ENCODE measurements at regions of chr22 and their contacts with region 1.

Region 1: DNA sequence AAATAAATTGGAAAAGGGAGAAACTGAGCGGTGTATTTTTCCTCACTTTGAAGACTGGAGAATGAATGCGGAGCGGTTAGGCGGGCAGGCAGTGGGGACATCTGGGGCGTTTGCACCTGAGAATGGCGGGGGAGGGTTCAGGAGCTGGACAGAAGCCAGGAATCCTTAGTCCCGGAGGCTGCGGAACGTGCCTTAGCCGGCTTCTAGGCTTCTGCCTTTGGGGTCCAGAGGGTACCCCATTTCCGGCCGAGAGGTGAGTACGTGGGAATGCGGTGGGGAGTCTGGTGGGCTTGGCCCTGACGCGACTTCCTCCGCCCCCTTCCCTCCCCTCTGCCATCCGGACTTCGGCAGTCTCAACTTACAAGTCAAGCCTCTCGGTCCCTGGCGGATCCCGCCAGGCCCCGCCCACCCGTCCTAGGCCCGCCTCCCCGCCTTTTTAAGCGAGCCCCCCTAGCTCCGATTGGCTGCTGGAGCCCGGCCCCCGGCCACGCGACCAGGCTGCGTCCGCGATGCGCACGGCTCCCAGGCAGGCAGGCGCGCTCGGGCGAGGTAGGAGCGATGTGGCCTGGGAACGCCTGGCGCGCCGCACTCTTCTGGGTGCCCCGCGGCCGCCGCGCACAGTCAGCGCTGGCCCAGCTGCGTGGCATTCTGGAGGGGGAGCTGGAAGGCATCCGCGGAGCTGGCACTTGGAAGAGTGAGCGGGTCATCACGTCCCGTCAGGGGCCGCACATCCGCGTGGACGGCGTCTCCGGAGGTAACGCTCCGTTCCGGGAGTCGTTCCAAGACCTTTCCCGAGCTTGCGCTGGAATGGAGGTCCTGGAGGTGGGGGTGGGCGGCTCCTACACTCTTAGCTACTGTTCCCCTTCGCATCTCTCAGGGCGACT is at the start of gene GCAT:
- DNase-seq: peak; percentile 61 to 92 (median 71)
- ATAC-seq: peak; percentile 94
- H3K4me3 ChIP-seq: peak within 1 kb of the TSS; percentile 58
- H3K4me3 Mint-ChIP-seq: peak within 1 kb of the TSS; percentile 67 to 90 (median 80)
- H3K27ac ChIP-seq: peak within 1 kb of the TSS; percentile 44
- H3K27ac Mint-ChIP-seq: peak within 1 kb of the TSS in 6 of 9 donors; percentile 8 to 65 (median 44)
- H3K4me1 ChIP-seq: peaks cover 14 to 30% of the 10 kb centered on the region in 2 donors
- H3K4me1 Mint-ChIP-seq: peaks cover 15 to 51% (median 43%) of the 10 kb centered on the region in 7 donors
- H3K27me3 ChIP-seq: peaks cover 0 to 25% of the 10 kb centered on the region in 2 donors
- H3K27me3 Mint-ChIP-seq: peaks cover 4 to 38% (median 23%) of the 10 kb centered on the region in 5 donors
- total RNA-seq, gene GCAT: 1.1 to 14.6 (median 5.4) TPM

Region 2: DNA sequence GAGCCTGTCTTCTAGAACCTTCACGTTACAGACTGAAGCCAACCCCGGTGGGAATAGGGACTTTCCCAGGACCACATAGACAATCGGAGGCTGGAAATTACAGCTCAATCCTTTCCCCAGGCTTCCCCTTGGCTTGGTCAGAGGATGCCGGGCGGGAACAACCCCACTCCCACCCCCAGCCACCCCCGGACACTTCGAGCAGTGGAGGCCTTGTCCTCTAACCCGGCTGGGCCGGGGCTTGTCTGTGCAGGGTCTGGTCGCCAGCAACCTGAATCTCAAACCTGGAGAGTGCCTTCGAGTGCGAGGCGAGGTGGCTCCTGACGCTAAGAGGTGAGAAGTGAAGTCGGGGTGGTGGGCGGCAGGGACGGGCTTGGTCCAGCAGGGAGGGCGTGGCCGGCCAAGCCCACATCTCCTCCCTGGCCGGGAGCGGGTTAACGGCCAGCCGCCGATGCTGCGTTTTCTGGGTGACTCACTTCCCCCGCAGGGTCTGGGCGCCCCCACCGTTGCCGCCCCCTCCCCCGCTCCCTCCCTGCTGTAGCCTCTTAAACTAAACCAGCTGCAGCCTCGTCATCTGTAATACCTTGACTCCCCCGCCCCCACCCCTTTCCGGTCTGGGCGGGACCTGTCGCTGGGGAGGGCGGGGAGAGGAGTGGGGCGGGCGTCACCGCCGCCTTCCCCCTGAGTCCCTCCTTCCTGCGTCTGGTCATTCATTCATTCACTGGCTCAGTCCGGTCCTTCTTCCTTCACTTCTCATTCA is 130.7 kb before region 1 on chr22:
- CTCF ChIA-PET with region 1: no interaction called
- POLR2A ChIA-PET with region 1: no interaction called
- intact Hi-C with region 1: loop called (anchors 5 to 10 kb)
- DNase-seq: peak; percentile 82 to 95 (median 94)
- ATAC-seq: peak; percentile 93
- H3K4me3 ChIP-seq: peak overlapping the region; percentile 60
- H3K4me3 Mint-ChIP-seq: peak overlapping the region; percentile 82 to 99 (median 91)
- H3K27ac ChIP-seq: peak overlapping the region; percentile 99
- H3K27ac Mint-ChIP-seq: peak overlapping the region; percentile 94 to 100 (median 100)
- H3K4me1 ChIP-seq: peaks cover 29 to 37% of the 10 kb centered on the region in 2 donors
- H3K4me1 Mint-ChIP-seq: peaks cover 14 to 68% (median 60%) of the 10 kb centered on the region in 7 donors
- H3K27me3 ChIP-seq: no peaks in the 10 kb centered on the region
- H3K27me3 Mint-ChIP-seq: no peaks in the 10 kb centered on the region

Region 3: GRCh38 chr22:37745548-37746365 is 61.9 kb before region 1 on chr22:
- CTCF ChIA-PET with region 1: no interaction called
- POLR2A ChIA-PET with region 1: no interaction called
- intact Hi-C with region 1: loop called (anchors 1 to 5 kb)
- DNase-seq: peak; percentile 67 to 90 (median 78)
- ATAC-seq: peak; percentile 97
- H3K4me3 ChIP-seq: peak overlapping the region; percentile 74
- H3K4me3 Mint-ChIP-seq: peak overlapping the region; percentile 82 to 96 (median 92)
- H3K27ac ChIP-seq: peak overlapping the region; percentile 77
- H3K27ac Mint-ChIP-seq: peak overlapping the region; percentile 75 to 93 (median 87)
- H3K4me1 ChIP-seq: peaks cover 9 to 18% of the 10 kb centered on the region in 2 donors
- H3K4me1 Mint-ChIP-seq: peaks cover 13 to 36% (median 26%) of the 10 kb centered on the region in 7 donors
- H3K27me3 ChIP-seq: no peaks in the 10 kb centered on the region
- H3K27me3 Mint-ChIP-seq: no peaks in the 10 kb centered on the region

Region 4: DNA sequence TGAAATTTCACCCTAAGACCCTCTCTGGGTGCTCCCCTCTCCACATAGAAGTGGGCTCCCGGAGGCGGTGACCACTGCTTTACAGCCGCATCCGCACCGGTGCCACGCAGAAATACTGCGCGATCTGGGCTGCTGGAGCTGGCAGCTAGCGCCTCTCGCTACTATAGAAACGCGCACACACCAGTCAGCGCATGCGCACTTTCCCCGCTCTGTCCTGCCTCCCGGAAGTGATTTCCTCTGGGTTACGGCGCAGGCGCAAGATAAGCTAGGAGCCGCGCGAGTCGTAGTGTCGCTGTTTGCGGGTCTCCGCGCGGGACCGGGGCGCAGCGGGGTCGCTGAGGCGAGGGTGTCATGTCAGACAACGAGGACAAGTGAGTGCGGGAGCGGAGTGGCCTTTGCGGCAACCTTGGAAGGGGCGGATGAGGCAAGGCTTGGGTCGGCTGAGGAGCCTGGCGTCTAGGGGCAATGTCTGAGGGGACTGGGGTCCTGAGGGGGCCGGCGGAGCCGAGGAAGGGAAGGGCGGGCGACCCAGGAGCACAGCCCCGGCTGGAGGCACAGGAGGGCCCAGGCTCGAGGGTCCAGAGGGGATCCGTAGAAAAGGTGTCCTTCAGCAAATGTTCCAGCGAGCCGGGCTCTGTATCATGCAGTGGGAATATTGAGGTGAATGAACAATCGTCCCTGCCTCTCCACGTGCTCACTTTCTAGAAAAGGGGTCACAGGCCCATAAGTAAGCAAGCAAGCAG is 146.0 kb after region 1 on chr22 and contains the starts of genes C22orf23 and POLR2F:
- CTCF ChIA-PET with region 1: no interaction called
- POLR2A ChIA-PET with region 1: no interaction called
- intact Hi-C with region 1: loop called (anchors 1 to 5 kb)
- DNase-seq: peak; percentile 92 to 96 (median 94)
- ATAC-seq: peak; percentile 97
- H3K4me3 ChIP-seq: peak within 1 kb of the TSS; percentile 96
- H3K4me3 Mint-ChIP-seq: peak within 1 kb of the TSS; percentile 93 to 100 (median 99)
- H3K27ac ChIP-seq: peak within 1 kb of the TSS; percentile 75
- H3K27ac Mint-ChIP-seq: peak within 1 kb of the TSS; percentile 93 to 99 (median 95)
- H3K4me1 ChIP-seq: peaks cover 13 to 18% of the 10 kb centered on the region in 2 donors
- H3K4me1 Mint-ChIP-seq: peaks cover 27 to 54% (median 51%) of the 10 kb centered on the region in 7 donors
- H3K27me3 ChIP-seq: no peaks in the 10 kb centered on the region
- H3K27me3 Mint-ChIP-seq: peaks cover 4 to 20% (median 14%) of the 10 kb centered on the region in 5 donors
- total RNA-seq, gene C22orf23: 0.31 TPM in 1 of 5 experiments, not detected in the others
- total RNA-seq, gene POLR2F: 25.9 to 67.8 (median 43.9) TPM

Region 5: GRCh38 chr22:38272373-38273134 is 464.9 kb after region 1 on chr22 and contains the start of gene TMEM184B:
- CTCF ChIA-PET with region 1: no interaction called
- POLR2A ChIA-PET with region 1: interaction called, 3 read pairs
- intact Hi-C with region 1: loop called in 1 of 2 experiments (anchors 2 kb)
- DNase-seq: peak; percentile 71 to 93 (median 87)
- ATAC-seq: peak; percentile 98
- H3K4me3 ChIP-seq: peak within 1 kb of the TSS; percentile 77
- H3K4me3 Mint-ChIP-seq: peak within 1 kb of the TSS; percentile 90 to 96 (median 94)
- H3K27ac ChIP-seq: peak within 1 kb of the TSS; percentile 89
- H3K27ac Mint-ChIP-seq: peak within 1 kb of the TSS; percentile 92 to 99 (median 96)
- H3K4me1 ChIP-seq: peaks cover 19 to 29% of the 10 kb centered on the region in 2 donors
- H3K4me1 Mint-ChIP-seq: peaks cover 33 to 62% (median 54%) of the 10 kb centered on the region in 7 donors
- H3K27me3 ChIP-seq: no peaks in the 10 kb centered on the region
- H3K27me3 Mint-ChIP-seq: peaks cover 0 to 8% (median 0%) of the 10 kb centered on the region in 5 donors
- total RNA-seq, gene TMEM184B: 26.9 to 41.3 (median 35.0) TPM

Measured in naive thymus-derived CD4-positive, alpha-beta T cell (primary cell).